ENCODE measurements at regions of chr1 and their contacts with region 1.

Region 1: GRCh38 chr1:206106328-206107167 is 10.6 kb downstream of the AVPR1B start:
- DNase-seq: peak; percentile 93

Region 2: GRCh38 chr1:205791568-205792180 is 314.9 kb before region 1 on chr1:
- intact Hi-C with region 1: loop called (anchors 10 kb)
- DNase-seq: no peak

Region 3: GRCh38 chr1:205919026-205919746 is 187.4 kb before region 1 on chr1:
- intact Hi-C with region 1: loop called (anchors 5 kb)
- DNase-seq: peak; percentile 92

Region 4: DNA sequence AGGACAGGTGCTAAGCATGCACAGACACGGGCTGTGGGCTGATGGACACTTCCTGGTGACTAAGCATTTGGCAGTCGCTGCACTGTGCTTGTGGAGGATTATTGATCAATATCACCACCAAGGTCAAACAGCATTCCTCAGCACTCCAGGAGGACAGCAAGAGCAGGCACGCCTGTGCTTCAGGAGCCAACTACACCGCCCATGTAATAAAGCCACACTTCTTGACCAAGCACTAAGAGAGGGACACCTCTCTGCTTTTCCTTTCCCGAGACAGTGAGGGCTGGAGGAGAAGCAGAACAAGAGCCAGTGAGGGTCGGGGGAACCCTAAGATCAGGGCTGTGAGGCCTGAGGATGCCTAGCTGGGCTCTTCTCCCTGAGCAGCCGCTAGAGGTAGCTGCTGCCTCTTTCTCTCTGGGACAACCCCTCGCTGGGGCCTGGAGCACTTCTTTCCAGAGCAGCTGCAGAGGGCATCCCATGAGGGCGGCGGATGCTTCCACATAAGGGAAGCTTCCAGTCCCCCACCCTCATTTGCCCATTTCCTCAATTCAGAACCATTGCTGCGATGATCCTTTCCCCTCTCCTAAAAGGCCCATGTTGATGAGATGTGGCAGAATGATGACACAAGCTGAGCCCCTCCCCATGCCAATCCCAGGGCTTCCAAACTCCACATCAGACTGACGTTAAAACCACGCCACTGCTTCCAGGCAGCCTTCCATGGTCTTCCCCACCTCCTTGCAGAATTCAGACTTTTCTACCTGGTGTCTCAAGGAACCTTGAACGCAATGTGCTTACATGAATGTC is 122.4 kb before region 1 on chr1:
- intact Hi-C with region 1: loop called (anchors 1 kb)
- DNase-seq: no peak

Region 5: DNA sequence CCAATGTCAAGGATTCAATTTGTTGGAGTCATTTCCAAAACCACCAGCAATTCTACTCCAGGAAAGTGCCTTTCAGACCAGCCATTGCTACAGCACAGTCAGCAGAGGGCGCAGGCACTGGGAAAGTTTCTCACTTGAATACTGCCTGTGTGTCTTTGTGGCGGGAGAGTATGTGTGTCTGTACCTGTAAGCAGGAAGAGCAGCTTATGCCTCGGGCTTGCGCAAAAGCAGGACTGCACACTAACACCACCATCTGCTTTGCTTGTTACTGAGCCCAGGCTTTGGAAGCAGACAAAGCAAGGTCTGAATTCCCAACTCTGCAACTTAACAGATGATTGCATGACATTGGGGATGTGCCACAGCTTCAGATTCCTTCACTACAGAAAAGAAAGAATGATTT is 75.8 kb before region 1 on chr1:
- intact Hi-C with region 1: loop called (anchors 5 kb)
- DNase-seq: no peak

Region 6: GRCh38 chr1:206117151-206117948 is 10.8 kb after region 1 on chr1 and contains the start of gene AVPR1B:
- intact Hi-C with region 1: no loop called
- DNase-seq: no peak
- total RNA-seq, gene AVPR1B: not detected

Measured in cardiac septum (tissue), 1 donor.